A549 (cell line): ENCODE measurements at regions of chr17 and their contacts with region 1.

Region 1: DNA sequence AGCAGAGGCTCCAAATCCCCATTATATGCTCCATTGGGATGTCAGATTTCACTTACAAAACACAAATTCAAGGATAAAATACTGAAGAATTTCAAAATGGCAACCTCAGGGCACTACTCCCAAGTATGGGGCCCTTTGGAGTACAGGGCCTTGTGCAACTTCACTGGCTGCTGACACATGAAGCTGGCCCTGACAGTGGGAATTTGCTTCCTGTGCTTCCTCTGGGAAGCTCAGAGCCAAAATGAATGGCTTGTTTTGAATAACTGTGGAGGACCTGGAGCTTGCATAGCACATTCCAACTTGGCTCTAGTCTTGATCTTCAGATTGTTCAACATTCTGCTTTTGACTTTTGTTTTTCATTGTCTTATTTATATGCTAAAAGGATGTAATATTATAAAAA is 52.3 kb upstream of the HNF1B start:
- DNase-seq: no peak
- ATAC-seq: no peak
- H3K4me3 ChIP-seq: no peak overlapping the region
- H3K27ac ChIP-seq: no peak overlapping the region
- H3K4me1 ChIP-seq: peaks cover 3% of the 10 kb centered on the region; the same call in 1 of the 3 replicates
- CTCF ChIP-seq: no peak
- EP300 ChIP-seq: no peak
- POLR2A ChIP-seq: no peak
- RAD21 ChIP-seq: no peak

Region 2: DNA sequence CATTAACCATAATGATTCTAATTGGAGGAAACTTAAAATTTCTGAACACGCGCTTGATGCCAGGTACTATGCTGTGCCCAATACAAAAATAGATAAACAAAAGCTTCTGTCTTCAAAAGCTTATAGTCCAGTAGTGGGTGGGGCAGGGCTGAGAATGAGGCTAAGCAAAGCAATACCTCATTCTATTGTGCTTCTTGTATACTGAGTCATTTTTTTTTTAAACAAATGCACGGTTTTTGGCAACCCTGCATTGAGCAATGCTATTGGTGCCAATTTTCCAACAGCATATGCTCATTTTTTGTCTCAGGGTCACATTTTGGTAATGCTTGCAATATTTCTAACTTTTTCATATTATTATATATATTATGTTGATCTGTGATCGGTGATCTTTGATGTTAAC is 17.7 kb before region 1 on chr17:
- CTCF ChIA-PET with region 1: interaction called, 10 read pairs
- POLR2A ChIA-PET with region 1: no interaction called
- DNase-seq: no peak
- ATAC-seq: peak; percentile 19 to 58; a peak in 2 of 6 replicates
- H3K4me3 ChIP-seq: no peak overlapping the region
- H3K27ac ChIP-seq: no peak overlapping the region
- H3K4me1 ChIP-seq: peaks cover 13% of the 10 kb centered on the region
- CTCF ChIP-seq: no peak
- EP300 ChIP-seq: no peak
- POLR2A ChIP-seq: no peak
- RAD21 ChIP-seq: no peak

Region 3: DNA sequence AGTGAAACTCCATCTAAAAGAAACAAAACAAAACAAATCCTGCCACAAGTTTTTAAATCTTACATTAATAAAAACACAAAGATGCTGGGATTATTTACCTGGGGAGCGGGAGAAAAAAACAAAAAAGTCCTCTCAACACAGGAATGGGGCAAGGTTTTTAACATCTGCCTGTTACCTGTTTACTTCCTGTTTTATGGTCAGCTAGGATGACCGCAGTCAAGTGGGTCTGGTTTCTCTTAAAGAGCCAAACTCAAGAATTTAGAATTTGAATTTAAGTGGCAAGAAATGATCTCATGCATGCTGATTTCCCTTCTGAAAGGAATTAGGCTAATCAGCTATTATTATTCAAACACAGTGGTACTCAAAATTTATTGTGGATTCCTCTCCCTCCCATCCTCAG is 87.3 kb after region 1 on chr17:
- CTCF ChIA-PET with region 1: no interaction called
- POLR2A ChIA-PET with region 1: no interaction called
- DNase-seq: no peak
- ATAC-seq: no peak
- H3K4me3 ChIP-seq: no peak overlapping the region
- H3K27ac ChIP-seq: no peak overlapping the region
- H3K4me1 ChIP-seq: no peaks in the 10 kb centered on the region
- CTCF ChIP-seq: no peak
- EP300 ChIP-seq: no peak
- POLR2A ChIP-seq: no peak
- RAD21 ChIP-seq: no peak